HepG2 (cell line): ENCODE measurements at regions of chr2 and their contacts with region 1.

Region 1: DNA sequence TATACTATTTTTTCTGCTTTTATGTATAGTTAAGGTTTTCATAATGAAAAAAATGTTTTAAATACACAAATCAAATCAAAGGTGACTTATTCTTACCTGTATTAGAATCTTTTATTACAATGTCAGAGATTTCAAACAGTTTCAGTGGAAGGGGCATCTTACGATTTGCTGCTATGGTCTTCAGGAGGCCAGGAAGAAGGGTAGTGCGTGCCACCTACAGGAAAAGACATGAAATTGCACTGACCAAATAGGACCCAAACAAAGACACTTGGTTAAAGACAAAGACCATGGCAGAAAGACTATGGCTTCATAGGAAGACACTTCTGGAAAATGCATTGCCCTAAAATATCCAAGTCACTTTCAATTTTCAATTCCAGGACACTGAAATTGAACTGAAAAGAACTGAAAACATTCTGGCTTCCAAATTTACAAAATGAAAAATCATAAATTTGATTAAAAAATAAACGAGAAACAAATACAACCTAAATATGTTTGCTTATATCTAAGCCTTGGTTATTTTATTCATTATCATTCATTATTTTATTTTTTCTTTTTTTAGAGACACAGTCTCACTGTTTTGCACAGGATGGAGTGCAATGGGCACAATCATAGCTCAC is 42.1 kb downstream of the FARSB start:
- DNase-seq: peak; percentile 54
- ATAC-seq: peak; percentile 90
- H3K4me3 ChIP-seq: no peak overlapping the region
- H3K27ac ChIP-seq: no peak overlapping the region
- H3K4me1 ChIP-seq: no peaks in the 10 kb centered on the region
- H3K27me3 ChIP-seq: no peaks in the 10 kb centered on the region
- CTCF ChIP-seq: peak; percentile 87
- EP300 ChIP-seq: no peak
- POLR2A ChIP-seq: no peak
- RAD21 ChIP-seq: peak; percentile 52; the same call in 1 of the 2 replicates

Region 2: GRCh38 chr2:222024932-222025880 is 588.6 kb before region 1 on chr2:
- CTCF ChIA-PET with region 1: interaction called, 7 read pairs
- POLR2A ChIA-PET with region 1: no interaction called
- in situ Hi-C with region 1: no loop called
- intact Hi-C with region 1: loop called (anchors 5 kb)
- DNase-seq: peak; percentile 31
- ATAC-seq: peak; percentile 75
- H3K4me3 ChIP-seq: no peak overlapping the region
- H3K27ac ChIP-seq: no peak overlapping the region
- H3K4me1 ChIP-seq: no peaks in the 10 kb centered on the region
- H3K27me3 ChIP-seq: peaks cover 0 to 24% of the 10 kb centered on the region in 2 experiments; a peak in 2 of 5 replicates
- CTCF ChIP-seq: peak; percentile 69
- EP300 ChIP-seq: no peak
- POLR2A ChIP-seq: no peak
- RAD21 ChIP-seq: no peak

Region 3: GRCh38 chr2:222057347-222058073 is 556.3 kb before region 1 on chr2:
- CTCF ChIA-PET with region 1: interaction called, 17 read pairs
- POLR2A ChIA-PET with region 1: no interaction called
- in situ Hi-C with region 1: no loop called
- intact Hi-C with region 1: loop called (anchors 1 kb)
- DNase-seq: no peak
- ATAC-seq: peak; percentile 50; the same call in 2 of the 3 replicates
- H3K4me3 ChIP-seq: no peak overlapping the region
- H3K27ac ChIP-seq: no peak overlapping the region
- H3K4me1 ChIP-seq: no peaks in the 10 kb centered on the region
- H3K27me3 ChIP-seq: peaks cover 0 to 17% of the 10 kb centered on the region in 2 experiments; a peak in 2 of 5 replicates
- CTCF ChIP-seq: peak; percentile 70
- EP300 ChIP-seq: no peak
- POLR2A ChIP-seq: no peak
- RAD21 ChIP-seq: peak; percentile 22; the same call in 1 of the 2 replicates

Region 4: DNA sequence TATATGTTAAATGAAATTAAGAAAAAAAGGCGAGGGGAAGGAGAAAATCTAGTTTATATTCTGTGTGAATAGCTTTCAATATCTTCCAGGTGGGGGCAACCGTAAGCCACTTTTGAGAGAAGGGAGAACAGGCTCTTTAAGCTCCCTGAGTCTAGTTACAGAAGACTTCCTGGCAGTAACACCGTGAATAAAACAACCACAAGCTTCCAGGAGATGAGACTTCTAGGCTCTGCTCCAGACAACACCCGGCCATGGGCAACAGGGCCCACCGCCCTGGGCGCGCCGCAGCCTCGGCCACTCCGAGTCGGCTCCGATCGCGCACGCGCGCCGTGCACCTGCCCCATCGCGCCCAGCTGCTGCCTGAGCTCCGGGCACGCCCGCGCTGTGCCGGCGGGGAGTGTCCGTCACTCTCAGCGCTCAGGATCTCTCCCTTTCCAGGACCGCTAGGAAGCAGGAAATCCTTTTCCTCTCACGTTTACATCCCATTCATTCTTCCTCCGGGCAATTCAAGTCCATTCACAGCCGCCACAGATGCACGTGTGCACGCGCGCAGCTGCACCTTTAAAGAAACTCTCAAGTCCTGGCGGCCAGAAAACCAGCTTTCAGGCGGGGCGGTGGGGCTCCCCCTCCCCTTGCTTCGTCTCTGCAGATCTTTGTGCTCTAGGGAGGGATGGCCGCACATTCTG is 295.7 kb before region 1 on chr2:
- CTCF ChIA-PET with region 1: interaction called, 5 read pairs
- POLR2A ChIA-PET with region 1: no interaction called
- in situ Hi-C with region 1: no loop called
- intact Hi-C with region 1: loop called (anchors 1 kb)
- DNase-seq: peak; percentile 53
- ATAC-seq: peak; percentile 94
- H3K4me3 ChIP-seq: peak overlapping the region; percentile 55 to 75 (median 61)
- H3K27ac ChIP-seq: no peak overlapping the region
- H3K4me1 ChIP-seq: peaks cover 15% of the 10 kb centered on the region
- H3K27me3 ChIP-seq: peaks cover 12 to 48% of the 10 kb centered on the region in 2 experiments
- CTCF ChIP-seq: peak; percentile 63
- EP300 ChIP-seq: no peak
- POLR2A ChIP-seq: no peak
- RAD21 ChIP-seq: peak; percentile 64

Region 5: GRCh38 chr2:222494104-222494739 is 119.6 kb before region 1 on chr2:
- CTCF ChIA-PET with region 1: no interaction called
- POLR2A ChIA-PET with region 1: no interaction called
- in situ Hi-C with region 1: no loop called
- intact Hi-C with region 1: no loop called
- DNase-seq: no peak
- ATAC-seq: no peak
- H3K4me3 ChIP-seq: no peak overlapping the region
- H3K27ac ChIP-seq: no peak overlapping the region
- H3K4me1 ChIP-seq: peaks cover 8% of the 10 kb centered on the region
- H3K27me3 ChIP-seq: peaks cover 0 to 4% of the 10 kb centered on the region in 2 experiments; a peak in 1 of 5 replicates
- CTCF ChIP-seq: no peak
- EP300 ChIP-seq: no peak
- POLR2A ChIP-seq: no peak
- RAD21 ChIP-seq: no peak

Region 6: GRCh38 chr2:222813177-222813843 is 199.5 kb after region 1 on chr2:
- CTCF ChIA-PET with region 1: no interaction called
- POLR2A ChIA-PET with region 1: no interaction called
- in situ Hi-C with region 1: no loop called
- intact Hi-C with region 1: no loop called
- DNase-seq: no peak
- ATAC-seq: peak; percentile 61
- H3K4me3 ChIP-seq: no peak overlapping the region
- H3K27ac ChIP-seq: no peak overlapping the region
- H3K4me1 ChIP-seq: peaks cover 32% of the 10 kb centered on the region
- H3K27me3 ChIP-seq: peaks cover 0 to 1% of the 10 kb centered on the region in 2 experiments; a peak in 1 of 5 replicates
- CTCF ChIP-seq: no peak
- EP300 ChIP-seq: no peak
- POLR2A ChIP-seq: no peak
- RAD21 ChIP-seq: no peak